MCF 10A (cell line): ENCODE measurements at regions of chr10 and their contacts with region 1.

Region 1: GRCh38 chr10:68105820-68106219 is 3.5 kb upstream of the MYPN start:
- DNase-seq: peak; percentile 54
- H3K4me3 Mint-ChIP-seq: peak overlapping the region; percentile 51
- H3K27ac Mint-ChIP-seq: peak overlapping the region; percentile 69
- H3K4me1 Mint-ChIP-seq: peaks cover 12% of the 10 kb centered on the region
- H3K27me3 Mint-ChIP-seq: no peaks in the 10 kb centered on the region
- CTCF ChIP-seq: no peak

Region 2: DNA sequence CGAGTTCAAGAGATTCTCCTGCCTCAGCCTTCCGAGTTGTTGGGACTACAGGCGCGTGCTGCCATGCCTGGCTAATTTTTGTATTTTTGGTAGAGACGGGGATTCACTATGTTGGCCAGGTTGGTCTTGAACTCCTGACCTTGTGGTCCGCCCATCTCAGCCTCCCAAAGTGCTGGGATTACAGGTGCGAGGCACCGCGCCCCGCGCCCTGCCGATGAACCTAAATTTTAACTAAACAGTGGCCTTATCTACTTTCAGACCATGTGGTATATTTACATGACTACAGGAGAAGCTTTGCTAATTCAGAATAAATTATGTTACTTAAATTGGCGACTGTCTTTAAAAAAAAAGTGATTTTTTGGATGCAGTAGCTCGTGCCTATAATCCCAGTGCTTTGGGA is 212.2 kb before region 1 on chr10:
- CTCF ChIA-PET with region 1: no interaction called
- POLR2A ChIA-PET with region 1: no interaction called
- intact Hi-C with region 1: no loop called
- DNase-seq: no peak
- H3K4me3 Mint-ChIP-seq: no peak overlapping the region
- H3K27ac Mint-ChIP-seq: no peak overlapping the region
- H3K4me1 Mint-ChIP-seq: no peaks in the 10 kb centered on the region
- H3K27me3 Mint-ChIP-seq: no peaks in the 10 kb centered on the region
- CTCF ChIP-seq: no peak

Region 3: DNA sequence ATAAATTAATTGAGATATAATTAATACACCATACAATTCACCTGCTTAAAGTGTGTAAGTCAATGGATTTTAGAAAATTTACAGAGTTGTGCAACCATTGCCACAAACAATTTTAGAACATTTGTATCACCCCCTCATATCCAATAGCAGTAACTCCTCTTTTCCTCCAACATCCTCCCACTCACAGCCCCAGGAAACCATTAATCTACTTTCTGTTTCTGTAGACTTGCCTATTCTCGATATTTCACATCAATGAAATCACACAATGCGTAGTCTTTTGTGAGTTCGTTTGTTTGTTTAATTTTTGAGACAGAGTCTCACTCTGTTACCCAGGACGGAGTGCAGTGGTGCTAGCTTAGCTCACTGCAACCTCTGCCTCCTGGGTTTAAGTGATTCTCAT is 17.1 kb before region 1 on chr10:
- CTCF ChIA-PET with region 1: interaction called, 4 read pairs
- POLR2A ChIA-PET with region 1: interaction called, 27 read pairs
- intact Hi-C with region 1: no loop called
- DNase-seq: peak; percentile 67
- H3K4me3 Mint-ChIP-seq: peak overlapping the region; percentile 50
- H3K27ac Mint-ChIP-seq: peak overlapping the region; percentile 94
- H3K4me1 Mint-ChIP-seq: peaks cover 27% of the 10 kb centered on the region
- H3K27me3 Mint-ChIP-seq: no peaks in the 10 kb centered on the region
- CTCF ChIP-seq: no peak

Region 4: DNA sequence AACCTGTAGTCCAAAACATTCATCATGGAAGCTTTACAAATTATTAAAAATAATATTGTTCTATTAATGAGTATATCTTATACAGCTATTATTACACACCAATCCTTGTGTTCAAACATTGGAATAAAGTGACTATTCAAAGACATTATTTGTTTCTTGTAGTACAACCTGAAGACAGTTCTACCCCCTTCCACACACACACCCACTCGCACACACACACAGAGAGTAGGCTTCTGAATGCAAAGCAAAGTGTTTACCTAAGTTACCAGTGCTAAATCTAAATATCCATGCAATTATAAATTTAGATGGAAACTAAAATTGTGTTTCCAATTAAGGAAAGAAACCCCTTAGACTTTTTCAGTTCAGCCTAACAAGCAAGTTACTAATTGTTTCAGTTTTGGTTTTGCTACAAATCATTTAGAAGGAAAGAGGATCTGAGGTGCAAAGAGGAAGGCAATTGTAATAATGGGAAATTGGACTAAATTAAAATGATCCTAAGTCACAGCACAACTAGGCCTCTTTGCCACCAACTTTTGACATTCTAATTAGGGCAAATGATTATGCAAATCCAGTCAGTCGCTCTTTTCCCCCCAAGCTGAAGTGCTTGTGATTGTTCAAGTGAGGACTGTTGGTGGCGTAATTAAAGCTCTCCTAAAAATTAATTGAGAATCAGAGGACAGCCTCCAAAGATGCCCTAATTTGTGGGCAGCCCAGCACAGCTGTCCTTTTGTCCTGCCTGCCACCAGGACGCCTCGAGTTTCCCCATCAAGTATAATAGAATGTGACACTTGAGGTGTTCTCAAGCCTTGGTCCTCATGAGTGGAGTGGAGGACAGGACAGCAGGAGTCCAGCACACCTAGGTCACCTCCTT is 146.0 kb after region 1 on chr10:
- CTCF ChIA-PET with region 1: no interaction called
- POLR2A ChIA-PET with region 1: no interaction called
- intact Hi-C with region 1: no loop called
- DNase-seq: no peak
- H3K4me3 Mint-ChIP-seq: no peak overlapping the region
- H3K27ac Mint-ChIP-seq: no peak overlapping the region
- H3K4me1 Mint-ChIP-seq: no peaks in the 10 kb centered on the region
- H3K27me3 Mint-ChIP-seq: peaks cover 13% of the 10 kb centered on the region
- CTCF ChIP-seq: no peak